AG04449 (cell line): ENCODE measurements at regions of chr15 and their contacts with region 1.

Region 1: GRCh38 chr15:71730277-71731144 is 79.8 kb upstream of the NR2E3 start:
- DNase-seq: no peak
- H3K4me3 ChIP-seq: no peak overlapping the region
- CTCF ChIP-seq: peak; percentile 83

Region 2: DNA sequence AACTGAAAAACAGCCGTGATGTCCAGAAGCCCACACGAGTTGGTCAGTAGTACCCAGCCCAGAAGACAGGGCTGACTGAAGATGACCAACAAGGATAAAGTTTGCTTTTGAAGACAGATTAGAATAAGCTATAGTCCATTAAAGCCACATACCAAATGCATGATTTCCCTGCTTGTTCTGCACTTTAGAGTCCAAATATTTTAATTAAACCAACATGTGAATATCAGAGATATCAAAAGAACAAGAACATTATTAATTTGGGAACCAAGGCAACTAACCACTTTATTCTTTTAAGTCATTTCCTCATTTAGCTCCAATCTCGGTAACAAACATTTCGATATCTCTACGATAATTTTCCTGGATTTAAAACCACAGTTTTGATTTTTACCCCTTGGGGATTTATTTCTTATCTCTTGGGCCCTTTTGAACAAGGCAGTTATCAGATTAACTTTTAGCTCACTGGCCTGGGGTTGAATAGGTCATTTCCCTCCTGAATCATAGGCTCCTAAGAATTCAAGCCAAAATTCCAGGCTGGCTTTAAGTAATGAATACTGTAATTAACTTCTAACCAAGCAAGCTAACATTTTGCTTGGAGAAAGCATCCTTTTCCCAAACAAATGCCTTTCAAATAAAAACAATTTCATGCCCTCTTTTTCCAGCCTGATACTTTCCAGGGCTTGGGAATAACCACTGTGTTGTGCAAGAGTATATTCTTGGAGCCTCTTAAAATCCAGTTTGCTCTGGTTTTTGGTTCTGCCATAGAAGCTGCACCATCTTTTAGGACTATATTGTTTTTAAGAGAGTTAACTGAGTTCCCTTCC is 23.1 kb before region 1 on chr15:
- CTCF ChIA-PET with region 1: interaction called, 99 read pairs
- POLR2A ChIA-PET with region 1: no interaction called
- DNase-seq: no peak
- H3K4me3 ChIP-seq: no peak overlapping the region
- CTCF ChIP-seq: no peak

Region 3: DNA sequence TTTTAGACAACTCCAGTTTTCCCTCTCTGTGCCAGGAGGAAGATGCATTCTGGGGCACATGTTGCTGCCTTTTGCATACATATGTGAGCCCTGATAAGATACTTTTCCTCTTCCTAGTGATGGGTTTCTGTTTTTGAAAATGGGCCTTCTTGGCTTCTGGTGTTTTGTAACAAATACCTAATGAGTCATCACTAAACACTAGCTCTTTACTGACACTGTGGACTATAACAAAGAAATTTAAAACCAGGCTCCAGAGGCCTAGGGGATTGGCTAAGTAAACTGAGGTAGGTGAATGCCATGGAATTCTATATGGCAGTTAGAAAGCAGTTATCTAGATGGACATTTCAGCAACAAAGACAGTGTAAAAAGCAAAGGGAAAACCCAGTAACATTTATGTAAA is 13.5 kb before region 1 on chr15:
- CTCF ChIA-PET with region 1: interaction called, 99 read pairs
- POLR2A ChIA-PET with region 1: no interaction called
- DNase-seq: no peak
- H3K4me3 ChIP-seq: no peak overlapping the region
- CTCF ChIP-seq: no peak

Region 4: DNA sequence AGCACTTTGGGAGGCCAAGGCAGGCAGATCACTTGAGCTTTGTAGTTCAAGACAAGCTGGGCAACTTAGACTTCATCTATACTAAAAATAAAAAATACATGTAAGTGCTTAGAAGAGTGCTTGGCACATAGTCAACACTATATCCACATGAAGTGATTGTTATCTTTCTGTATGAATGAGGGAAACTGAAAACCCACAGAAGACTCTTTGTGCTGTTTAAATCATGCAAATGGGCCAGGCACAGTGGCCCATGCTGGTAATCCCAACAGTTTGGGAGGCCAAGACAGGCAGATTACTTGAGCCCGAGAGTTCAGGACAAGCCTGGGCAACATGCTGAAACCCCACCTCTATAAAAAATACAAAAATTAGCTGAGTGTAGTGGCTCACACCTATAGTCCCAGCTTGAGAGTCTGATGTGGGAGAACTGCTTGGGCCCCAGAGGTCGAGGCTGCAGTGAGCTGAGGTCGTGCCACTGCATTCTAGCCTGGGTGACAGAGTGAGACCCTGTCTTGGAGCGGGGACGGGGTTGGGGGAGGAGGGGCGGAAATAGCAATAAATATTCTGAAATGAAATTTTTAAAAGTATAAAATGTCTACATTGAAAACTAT is 209.6 kb after region 1 on chr15:
- CTCF ChIA-PET with region 1: no interaction called
- POLR2A ChIA-PET with region 1: no interaction called
- DNase-seq: no peak
- H3K4me3 ChIP-seq: no peak overlapping the region
- CTCF ChIP-seq: no peak